IMR-90 (cell line): ENCODE measurements at regions of chr6 and their contacts with region 1.

Region 1: GRCh38 chr6:45922728-45923351 is 92.8 kb downstream of the CLIC5 start:
- DNase-seq: peak; percentile 61
- ATAC-seq: peak; percentile 78
- H3K4me3 ChIP-seq: no peak overlapping the region
- H3K27ac ChIP-seq: no peak overlapping the region
- H3K4me1 ChIP-seq: peaks cover 2% of the 10 kb centered on the region; the same call in 1 of the 2 replicates
- H3K27me3 ChIP-seq: peaks cover 4% of the 10 kb centered on the region
- CTCF ChIP-seq: peak; percentile 77
- POLR2A ChIP-seq: no peak
- RAD21 ChIP-seq: peak; percentile 91

Region 2: DNA sequence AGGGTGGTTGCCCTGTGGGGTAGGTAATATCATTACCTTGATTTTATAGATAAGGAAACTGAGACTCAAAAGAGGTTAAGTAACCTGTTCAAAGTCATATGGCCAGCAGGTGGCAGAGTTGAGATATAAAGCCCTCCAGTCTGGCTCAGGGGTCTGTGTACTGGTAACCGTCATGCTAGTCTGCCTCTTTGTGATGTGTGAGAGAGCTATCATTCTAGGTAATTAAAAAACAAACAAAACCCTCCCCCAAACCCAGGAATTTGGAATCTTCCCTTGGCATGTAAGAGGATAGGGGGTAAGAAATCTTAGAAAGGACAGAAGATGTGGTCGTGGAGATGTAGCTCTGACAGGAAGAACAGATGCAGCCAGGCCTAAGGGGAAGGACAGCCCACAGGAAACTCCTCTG is 1329.3 kb before region 1 on chr6:
- CTCF ChIA-PET with region 1: interaction called, 5 read pairs
- POLR2A ChIA-PET with region 1: no interaction called
- dilution Hi-C with region 1: no loop called
- in situ Hi-C with region 1: no loop called
- intact Hi-C with region 1: loop called (anchors 5 kb)
- DNase-seq: peak; percentile 58
- ATAC-seq: peak; percentile 81
- H3K4me3 ChIP-seq: no peak overlapping the region
- H3K27ac ChIP-seq: no peak overlapping the region
- H3K4me1 ChIP-seq: no peaks in the 10 kb centered on the region
- H3K27me3 ChIP-seq: peaks cover 28% of the 10 kb centered on the region
- CTCF ChIP-seq: peak; percentile 54
- POLR2A ChIP-seq: no peak
- RAD21 ChIP-seq: peak; percentile 59

Region 3: GRCh38 chr6:44630125-44631028 is 1292.5 kb before region 1 on chr6:
- CTCF ChIA-PET with region 1: interaction called, 18 read pairs
- POLR2A ChIA-PET with region 1: no interaction called
- dilution Hi-C with region 1: no loop called
- in situ Hi-C with region 1: no loop called
- intact Hi-C with region 1: loop called (anchors 1 kb)
- DNase-seq: peak; percentile 51
- ATAC-seq: peak; percentile 95
- H3K4me3 ChIP-seq: no peak overlapping the region
- H3K27ac ChIP-seq: no peak overlapping the region
- H3K4me1 ChIP-seq: no peaks in the 10 kb centered on the region
- H3K27me3 ChIP-seq: peaks cover 19% of the 10 kb centered on the region
- CTCF ChIP-seq: peak; percentile 68
- POLR2A ChIP-seq: no peak
- RAD21 ChIP-seq: peak; percentile 74

Region 4: GRCh38 chr6:44655412-44656342 is 1267.2 kb before region 1 on chr6:
- CTCF ChIA-PET with region 1: interaction called, 7 read pairs
- POLR2A ChIA-PET with region 1: no interaction called
- dilution Hi-C with region 1: no loop called
- in situ Hi-C with region 1: loop called (anchors 25 kb)
- intact Hi-C with region 1: loop called (anchors 1 kb)
- DNase-seq: peak; percentile 28
- ATAC-seq: peak; percentile 70
- H3K4me3 ChIP-seq: no peak overlapping the region
- H3K27ac ChIP-seq: no peak overlapping the region
- H3K4me1 ChIP-seq: peaks cover 10% of the 10 kb centered on the region
- H3K27me3 ChIP-seq: no peaks in the 10 kb centered on the region
- CTCF ChIP-seq: peak; percentile 90
- POLR2A ChIP-seq: no peak
- RAD21 ChIP-seq: peak; percentile 93

Region 5: DNA sequence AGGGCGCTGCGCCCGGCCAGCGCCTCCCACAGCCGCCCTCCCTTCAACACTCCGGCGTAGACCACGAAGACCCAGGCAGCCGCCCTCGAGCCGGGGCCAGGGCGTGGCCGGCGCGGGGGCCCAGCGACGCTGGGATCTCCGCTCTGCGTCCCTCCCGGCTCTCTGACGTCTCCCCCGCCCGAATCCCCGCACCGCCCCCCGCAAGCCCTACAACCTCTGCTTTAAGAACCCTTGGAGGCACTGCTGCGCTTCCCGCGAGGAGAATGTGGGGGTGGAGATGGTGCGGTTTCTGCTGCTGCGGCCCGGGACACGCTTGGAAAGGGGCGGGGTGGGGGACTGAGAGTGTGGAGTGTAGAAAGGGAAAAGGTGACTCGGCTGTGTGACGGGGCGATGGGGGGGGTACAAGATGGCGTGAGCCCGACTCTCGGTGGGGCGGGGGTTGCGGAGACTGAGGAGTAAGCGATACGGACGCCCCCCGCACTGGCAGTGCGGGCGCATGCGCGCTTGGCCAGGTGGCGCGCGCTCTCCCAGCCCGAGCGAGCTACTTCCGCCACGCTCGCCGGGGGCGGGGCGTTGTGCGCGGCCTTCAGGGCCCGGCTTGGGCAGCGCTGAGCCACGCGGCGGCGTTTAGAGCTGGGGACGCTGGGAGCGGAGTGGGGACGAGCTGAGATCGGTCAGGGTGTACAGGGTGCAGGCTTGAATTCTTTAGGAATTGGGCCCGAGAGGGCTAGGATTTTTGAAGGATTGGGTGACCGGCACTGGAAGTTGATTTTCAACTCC is 545.1 kb before region 1 on chr6 and contains the start of gene SUPT3H:
- CTCF ChIA-PET with region 1: no interaction called
- POLR2A ChIA-PET with region 1: no interaction called
- dilution Hi-C with region 1: no loop called
- in situ Hi-C with region 1: no loop called
- intact Hi-C with region 1: loop called (anchors 1 kb)
- DNase-seq: peak; percentile 93
- ATAC-seq: peak; percentile 94
- H3K4me3 ChIP-seq: peak within 1 kb of the TSS; percentile 66
- H3K27ac ChIP-seq: peak within 1 kb of the TSS; percentile 95
- H3K4me1 ChIP-seq: no peaks in the 10 kb centered on the region
- H3K27me3 ChIP-seq: no peaks in the 10 kb centered on the region
- CTCF ChIP-seq: peak; percentile 27; the same call in 1 of the 2 replicates
- POLR2A ChIP-seq: peak; percentile 93
- RAD21 ChIP-seq: peak; percentile 41
- total RNA-seq, gene SUPT3H: 4.2 and 5.0 TPM in 2 replicates

Region 6: DNA sequence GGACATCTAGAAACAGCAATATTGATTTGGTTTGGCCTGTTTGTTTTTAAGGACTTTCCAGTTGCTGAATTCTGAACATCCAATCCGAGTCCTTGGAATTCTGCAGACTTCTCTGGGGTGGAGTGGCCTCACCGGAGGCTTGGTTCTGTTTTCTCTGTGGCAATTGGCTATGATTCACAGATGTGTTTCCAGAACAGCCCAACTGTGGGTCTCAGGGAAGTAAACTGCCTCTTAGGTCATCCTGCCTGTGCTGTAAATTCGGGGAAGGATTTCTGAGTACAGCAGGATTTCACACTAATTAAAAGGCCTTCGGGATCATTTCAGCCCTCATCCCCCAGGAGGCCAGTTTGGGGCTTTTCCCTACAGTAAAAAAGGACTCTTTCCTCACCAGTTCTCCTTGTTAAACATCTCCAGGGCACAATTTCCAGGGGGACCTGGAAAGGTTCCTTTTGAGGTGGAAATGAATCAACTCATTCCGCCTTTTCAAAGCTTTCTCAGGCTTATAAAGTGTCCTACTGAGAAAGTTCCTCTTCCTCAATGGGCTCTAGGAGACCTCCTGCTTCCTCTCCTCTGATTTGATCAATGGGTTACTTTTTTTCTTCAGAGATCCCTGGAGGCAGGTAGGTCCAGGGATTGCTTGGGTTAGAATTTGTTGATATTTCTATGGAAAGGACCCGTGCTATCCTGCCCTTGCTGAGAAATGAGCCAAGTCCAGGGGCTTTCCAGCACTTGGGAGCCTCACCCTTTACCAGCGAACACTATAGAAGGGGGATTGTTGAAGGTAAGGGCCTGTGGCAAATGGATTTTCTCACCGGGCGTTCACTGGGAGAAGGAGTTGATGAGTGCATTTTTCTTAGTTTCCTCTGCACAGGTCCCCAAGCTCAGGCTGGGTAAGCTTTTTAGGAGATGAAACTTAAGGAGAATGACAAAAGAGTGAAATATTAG is 21.8 kb before region 1 on chr6:
- CTCF ChIA-PET with region 1: no interaction called
- POLR2A ChIA-PET with region 1: no interaction called
- dilution Hi-C with region 1: no loop called
- in situ Hi-C with region 1: no loop called
- intact Hi-C with region 1: no loop called
- DNase-seq: no peak
- ATAC-seq: no peak
- H3K4me3 ChIP-seq: no peak overlapping the region
- H3K27ac ChIP-seq: no peak overlapping the region
- H3K4me1 ChIP-seq: no peaks in the 10 kb centered on the region
- H3K27me3 ChIP-seq: peaks cover 8% of the 10 kb centered on the region; the same call in 1 of the 2 replicates
- CTCF ChIP-seq: no peak
- POLR2A ChIP-seq: no peak
- RAD21 ChIP-seq: no peak